Activated CD4-positive, alpha-beta memory T cell treated with anti-CD3 and anti-CD28 coated beads for 36 hours (primary cell): ENCODE measurements at regions of chr10 and their contacts with region 1.

Region 1: DNA sequence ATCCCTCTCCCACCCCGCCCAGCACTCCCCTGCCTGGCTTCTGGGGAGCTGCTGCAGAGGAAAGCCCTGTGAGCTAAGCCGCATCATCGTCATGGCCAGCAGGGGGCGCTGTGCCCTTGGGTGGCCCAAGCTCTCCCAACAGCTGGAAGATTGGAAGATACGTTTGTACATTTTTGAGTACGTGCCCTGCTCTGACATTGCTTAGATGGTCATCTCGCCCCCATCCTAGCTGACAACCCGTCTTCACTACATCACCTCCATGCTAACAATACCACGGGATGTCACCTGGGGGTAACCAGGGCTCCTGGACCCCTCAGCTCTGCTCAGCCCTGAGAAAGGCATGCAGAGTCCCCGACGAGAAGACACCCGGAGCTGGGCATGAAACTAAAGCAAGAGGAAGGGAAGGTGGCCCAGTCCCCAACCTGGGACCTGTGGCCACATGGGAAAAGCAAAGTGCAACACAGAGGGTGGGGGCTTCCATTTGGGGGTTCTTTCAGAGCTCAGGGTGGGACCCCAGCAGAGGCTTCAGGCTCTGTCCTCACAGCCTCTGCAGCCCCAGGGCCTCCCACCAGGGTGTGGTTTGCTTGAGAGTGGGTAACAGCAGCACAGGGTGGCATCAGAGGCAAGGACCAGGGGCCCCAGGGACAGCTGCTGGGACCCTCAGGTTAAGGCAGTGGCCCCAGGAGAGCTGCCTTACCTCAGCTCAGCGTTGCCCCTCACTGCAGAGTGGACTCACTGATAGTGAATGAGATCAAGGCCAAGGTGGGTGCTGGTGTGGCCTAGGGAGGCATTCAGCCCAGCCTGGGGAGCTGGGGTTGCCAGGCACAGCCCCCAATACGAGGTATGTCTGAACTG is 136.7 kb downstream of the PTPN20 start:
- DNase-seq: peak; percentile 87
- H3K4me3 Mint-ChIP-seq: no peak overlapping the region
- H3K27ac Mint-ChIP-seq: no peak overlapping the region
- H3K4me1 Mint-ChIP-seq: peaks cover 20% of the 10 kb centered on the region
- H3K27me3 Mint-ChIP-seq: no peaks in the 10 kb centered on the region

Region 2: DNA sequence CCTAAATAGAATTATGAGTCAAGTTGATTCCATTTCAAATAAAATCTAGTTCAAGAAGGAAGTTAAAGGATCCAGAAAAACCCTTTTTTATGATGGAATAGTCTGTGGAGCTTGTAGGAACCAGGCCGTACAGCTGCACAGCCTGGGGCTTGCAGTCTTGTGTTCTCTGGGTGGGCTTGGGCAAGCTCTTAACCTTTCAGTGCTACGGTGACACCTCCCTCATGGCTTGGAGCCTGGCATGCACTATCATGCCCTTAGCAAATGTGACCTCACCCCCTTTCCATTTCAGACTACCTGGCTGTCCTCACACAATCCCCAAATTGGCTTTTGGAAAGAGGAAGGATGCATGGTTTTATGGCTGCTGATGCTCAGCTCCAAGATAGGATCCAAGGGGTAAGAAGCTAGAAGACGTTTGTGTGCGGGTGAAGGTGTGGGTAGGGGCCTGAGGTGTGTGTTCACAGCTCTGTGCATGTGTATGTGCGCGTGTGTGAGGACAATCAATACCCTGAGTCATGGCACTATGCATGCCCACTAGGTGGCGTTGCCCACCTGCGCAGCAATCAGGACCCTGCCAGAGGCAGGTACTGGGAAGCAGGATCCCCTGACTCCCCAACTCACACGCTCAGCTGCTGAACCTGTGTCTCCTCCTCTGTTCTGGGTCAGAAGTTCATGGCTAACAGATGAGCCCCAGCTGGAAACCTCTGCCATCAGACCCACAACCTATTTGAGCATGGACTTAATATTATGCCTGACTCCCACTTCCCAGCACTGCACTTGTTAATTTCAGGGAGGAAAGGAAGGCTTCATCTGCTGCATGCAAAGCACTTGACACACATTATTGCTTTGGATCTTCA is 23.3 kb before region 1 on chr10:
- CTCF ChIA-PET with region 1: interaction called, 35 read pairs
- POLR2A ChIA-PET with region 1: no interaction called
- intact Hi-C with region 1: no loop called
- DNase-seq: peak; percentile 79
- H3K4me3 Mint-ChIP-seq: no peak overlapping the region
- H3K27ac Mint-ChIP-seq: no peak overlapping the region
- H3K4me1 Mint-ChIP-seq: no peaks in the 10 kb centered on the region
- H3K27me3 Mint-ChIP-seq: peaks cover 5% of the 10 kb centered on the region

Region 3: DNA sequence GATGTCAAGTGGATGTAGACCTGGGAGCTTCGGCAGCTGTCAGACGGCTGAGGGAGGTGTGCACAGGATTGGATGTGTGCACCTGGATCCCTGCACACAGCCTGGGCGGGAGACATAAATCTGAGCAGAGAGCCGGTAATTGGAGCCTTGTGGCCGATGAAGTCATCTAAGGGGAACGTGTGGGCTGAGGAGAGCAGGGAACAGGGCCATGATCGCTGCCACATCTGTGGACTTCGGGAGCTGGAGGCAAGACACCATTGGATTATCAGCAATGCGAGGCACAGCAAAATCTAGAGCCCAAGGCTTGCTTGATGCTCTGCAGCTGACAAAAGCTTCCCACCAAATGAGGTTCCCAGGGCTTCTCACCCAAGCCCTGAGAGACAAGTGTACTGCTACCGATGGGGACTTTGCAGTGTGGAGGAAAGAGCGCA is 11.1 kb after region 1 on chr10:
- CTCF ChIA-PET with region 1: interaction called, 10 read pairs
- POLR2A ChIA-PET with region 1: no interaction called
- intact Hi-C with region 1: no loop called
- DNase-seq: no peak
- H3K4me3 Mint-ChIP-seq: no peak overlapping the region
- H3K27ac Mint-ChIP-seq: no peak overlapping the region
- H3K4me1 Mint-ChIP-seq: no peaks in the 10 kb centered on the region
- H3K27me3 Mint-ChIP-seq: peaks cover 5% of the 10 kb centered on the region

Region 4: GRCh38 chr10:47165711-47166524 is 118.0 kb after region 1 on chr10:
- CTCF ChIA-PET with region 1: interaction called, 11 read pairs
- POLR2A ChIA-PET with region 1: no interaction called
- intact Hi-C with region 1: no loop called
- DNase-seq: peak; percentile 58
- H3K4me3 Mint-ChIP-seq: peak overlapping the region; percentile 67
- H3K27ac Mint-ChIP-seq: peak overlapping the region; percentile 78
- H3K4me1 Mint-ChIP-seq: peaks cover 27% of the 10 kb centered on the region
- H3K27me3 Mint-ChIP-seq: no peaks in the 10 kb centered on the region

Region 5: DNA sequence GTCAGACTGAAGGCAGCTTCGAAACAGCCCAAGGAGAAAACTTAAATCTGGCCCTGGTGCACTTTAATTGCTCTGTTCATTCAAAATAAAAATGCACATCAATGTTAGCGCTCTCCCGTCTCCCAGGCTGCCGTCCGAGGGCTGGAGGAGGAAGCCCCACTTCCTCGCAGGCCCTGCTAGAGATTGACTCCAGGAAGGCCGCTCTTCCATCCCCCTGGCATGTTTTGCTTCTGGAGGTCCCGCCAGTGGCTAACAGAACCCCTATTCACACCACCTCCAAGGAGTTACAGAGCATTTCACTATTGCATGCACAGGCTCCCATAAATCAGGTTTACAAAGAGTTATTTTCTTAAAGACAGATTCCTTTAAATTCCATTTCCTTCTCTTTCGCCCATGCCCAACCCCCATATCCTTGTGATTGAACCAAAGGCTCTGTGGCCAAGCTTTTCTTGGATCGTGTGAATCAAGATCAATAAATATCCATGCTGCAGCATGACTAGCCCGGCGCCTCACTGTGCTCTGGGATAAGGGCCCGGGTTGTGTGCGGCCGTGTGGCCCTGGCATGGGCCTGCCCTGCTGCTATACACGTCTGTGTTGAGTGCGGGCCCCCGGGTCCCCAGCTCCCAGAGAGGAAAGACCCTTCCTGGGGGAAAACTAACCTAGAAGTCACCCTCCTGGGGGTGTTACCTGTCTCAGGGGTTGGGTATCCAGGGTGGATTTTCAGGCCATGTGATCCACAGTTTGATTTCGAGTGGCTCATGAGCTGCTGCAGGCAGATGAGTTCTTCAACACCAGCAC is 133.4 kb after region 1 on chr10:
- CTCF ChIA-PET with region 1: no interaction called
- POLR2A ChIA-PET with region 1: no interaction called
- intact Hi-C with region 1: no loop called
- DNase-seq: no peak
- H3K4me3 Mint-ChIP-seq: no peak overlapping the region
- H3K27ac Mint-ChIP-seq: no peak overlapping the region
- H3K4me1 Mint-ChIP-seq: no peaks in the 10 kb centered on the region
- H3K27me3 Mint-ChIP-seq: no peaks in the 10 kb centered on the region

Region 6: GRCh38 chr10:47287365-47287802 is 239.5 kb after region 1 on chr10:
- CTCF ChIA-PET with region 1: interaction called, 12 read pairs
- POLR2A ChIA-PET with region 1: no interaction called
- intact Hi-C with region 1: no loop called
- DNase-seq: no peak
- H3K4me3 Mint-ChIP-seq: no peak overlapping the region
- H3K27ac Mint-ChIP-seq: no peak overlapping the region
- H3K4me1 Mint-ChIP-seq: peaks cover 22% of the 10 kb centered on the region
- H3K27me3 Mint-ChIP-seq: no peaks in the 10 kb centered on the region

Region 7: GRCh38 chr10:47311932-47312662 is 264.2 kb after region 1 on chr10:
- CTCF ChIA-PET with region 1: interaction called, 369 read pairs
- POLR2A ChIA-PET with region 1: interaction called, 7 read pairs
- intact Hi-C with region 1: loop called (anchors 1 kb)
- DNase-seq: peak; percentile 91
- H3K4me3 Mint-ChIP-seq: no peak overlapping the region
- H3K27ac Mint-ChIP-seq: peak overlapping the region; percentile 51
- H3K4me1 Mint-ChIP-seq: peaks cover 22% of the 10 kb centered on the region
- H3K27me3 Mint-ChIP-seq: no peaks in the 10 kb centered on the region